Activated CD4-positive, alpha-beta T cell treated with anti-CD3 and anti-CD28 coated beads, Interleukin-2, amount 10 ng/mL, durations not matched to agents 24 days and 14 days (primary cell): ENCODE measurements at regions of chr10 and their contacts with region 1.

Region 1: GRCh38 chr10:101067356-101068083 is 5.7 kb downstream of the KAZALD1 start:
- DNase-seq: peak; percentile 94
- H3K4me3 Mint-ChIP-seq: peak overlapping the region; percentile 88
- H3K27ac Mint-ChIP-seq: no peak overlapping the region
- H3K4me1 Mint-ChIP-seq: peaks cover 20% of the 10 kb centered on the region
- H3K27me3 Mint-ChIP-seq: peaks cover 57% of the 10 kb centered on the region

Region 2: DNA sequence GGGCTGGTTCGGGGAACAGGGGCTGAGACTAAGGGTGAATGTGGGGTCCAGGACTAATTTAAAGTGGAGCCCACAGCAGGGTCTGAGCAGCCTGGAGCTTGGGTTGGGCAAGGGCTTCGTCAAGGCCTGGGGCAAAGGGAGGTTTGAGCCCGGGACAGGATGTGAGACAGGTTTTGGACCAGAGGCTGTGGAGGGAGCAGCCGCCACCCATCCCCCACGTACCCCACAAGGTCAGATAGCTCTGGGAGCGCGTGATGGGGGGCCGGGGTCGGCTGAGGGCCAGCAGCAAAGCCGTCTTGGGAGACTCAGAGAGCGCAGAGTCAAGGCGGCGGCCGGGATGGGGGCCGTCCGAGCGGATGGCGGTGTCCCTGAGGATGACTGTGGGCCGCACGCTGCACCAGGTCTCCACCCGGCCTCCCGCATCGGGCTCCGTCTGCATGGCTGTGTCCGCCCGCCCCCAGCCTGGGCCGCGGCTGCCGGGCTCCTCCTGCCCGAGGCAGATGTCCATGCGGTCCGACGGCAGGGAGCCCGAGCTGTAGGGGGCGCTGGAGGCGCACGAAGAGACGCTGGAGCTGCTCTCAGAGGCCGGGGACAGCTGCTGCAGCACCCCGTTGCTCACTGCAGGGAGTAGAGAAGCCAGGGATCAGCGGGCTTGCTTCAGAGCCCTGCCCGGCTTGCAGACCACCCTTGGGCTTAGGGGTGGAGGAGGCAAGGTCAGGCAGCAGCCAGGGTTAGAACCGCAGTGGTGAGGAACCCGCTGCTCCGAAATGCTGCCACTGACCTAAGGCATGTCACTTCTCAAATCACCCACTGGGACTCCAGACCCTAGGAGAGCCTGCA is 48.7 kb before region 1 on chr10:
- intact Hi-C with region 1: loop called (anchors 1 kb)
- DNase-seq: peak; percentile 94
- H3K4me3 Mint-ChIP-seq: no peak overlapping the region
- H3K27ac Mint-ChIP-seq: no peak overlapping the region
- H3K4me1 Mint-ChIP-seq: peaks cover 21% of the 10 kb centered on the region
- H3K27me3 Mint-ChIP-seq: peaks cover 41% of the 10 kb centered on the region

Region 3: DNA sequence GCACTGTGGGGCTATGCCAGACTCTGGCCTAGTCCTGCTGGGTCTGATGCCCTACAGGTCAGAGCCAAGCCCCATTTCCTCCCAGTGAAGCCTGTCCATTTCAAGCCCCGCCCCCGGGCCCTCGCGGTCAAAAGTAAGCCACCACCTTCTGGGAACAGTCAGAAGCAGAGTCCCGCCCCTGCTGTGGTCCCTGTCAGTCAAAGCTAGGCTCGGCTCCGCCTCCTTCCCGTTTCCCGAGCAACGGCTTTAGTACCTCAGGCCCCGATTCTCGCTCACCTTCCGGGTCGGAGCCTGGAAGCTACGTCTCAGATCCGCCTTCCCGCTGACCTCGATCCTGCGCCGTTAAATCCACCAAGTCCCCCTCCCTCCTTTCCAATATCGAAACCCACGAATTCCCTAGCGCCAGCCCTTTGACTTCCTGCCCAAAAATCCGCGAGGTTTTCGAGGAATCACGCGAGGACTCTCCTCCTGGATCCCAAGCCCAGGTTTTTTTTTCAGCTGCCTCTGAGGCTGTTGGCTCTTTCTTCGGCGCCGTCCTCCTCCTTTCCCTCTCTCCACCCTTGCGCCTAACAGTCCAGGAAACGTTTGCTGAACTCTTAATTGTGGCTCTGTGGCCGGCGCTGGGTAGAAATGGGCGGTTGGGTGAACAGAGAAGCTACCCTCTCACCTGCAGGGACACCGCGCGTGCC is 24.7 kb before region 1 on chr10:
- intact Hi-C with region 1: loop called (anchors 1 kb)
- DNase-seq: peak; percentile 96
- H3K4me3 Mint-ChIP-seq: peak overlapping the region; percentile 97
- H3K27ac Mint-ChIP-seq: peak overlapping the region; percentile 89
- H3K4me1 Mint-ChIP-seq: peaks cover 19% of the 10 kb centered on the region
- H3K27me3 Mint-ChIP-seq: peaks cover 32% of the 10 kb centered on the region

Region 4: GRCh38 chr10:101050208-101051069 is 17.1 kb before region 1 on chr10:
- intact Hi-C with region 1: loop called (anchors 1 kb)
- DNase-seq: peak; percentile 96
- H3K4me3 Mint-ChIP-seq: peak overlapping the region; percentile 64
- H3K27ac Mint-ChIP-seq: peak overlapping the region; percentile 52
- H3K4me1 Mint-ChIP-seq: peaks cover 13% of the 10 kb centered on the region
- H3K27me3 Mint-ChIP-seq: peaks cover 51% of the 10 kb centered on the region